ENCODE measurements at regions of chr2 and their contacts with region 1.

Region 1: DNA sequence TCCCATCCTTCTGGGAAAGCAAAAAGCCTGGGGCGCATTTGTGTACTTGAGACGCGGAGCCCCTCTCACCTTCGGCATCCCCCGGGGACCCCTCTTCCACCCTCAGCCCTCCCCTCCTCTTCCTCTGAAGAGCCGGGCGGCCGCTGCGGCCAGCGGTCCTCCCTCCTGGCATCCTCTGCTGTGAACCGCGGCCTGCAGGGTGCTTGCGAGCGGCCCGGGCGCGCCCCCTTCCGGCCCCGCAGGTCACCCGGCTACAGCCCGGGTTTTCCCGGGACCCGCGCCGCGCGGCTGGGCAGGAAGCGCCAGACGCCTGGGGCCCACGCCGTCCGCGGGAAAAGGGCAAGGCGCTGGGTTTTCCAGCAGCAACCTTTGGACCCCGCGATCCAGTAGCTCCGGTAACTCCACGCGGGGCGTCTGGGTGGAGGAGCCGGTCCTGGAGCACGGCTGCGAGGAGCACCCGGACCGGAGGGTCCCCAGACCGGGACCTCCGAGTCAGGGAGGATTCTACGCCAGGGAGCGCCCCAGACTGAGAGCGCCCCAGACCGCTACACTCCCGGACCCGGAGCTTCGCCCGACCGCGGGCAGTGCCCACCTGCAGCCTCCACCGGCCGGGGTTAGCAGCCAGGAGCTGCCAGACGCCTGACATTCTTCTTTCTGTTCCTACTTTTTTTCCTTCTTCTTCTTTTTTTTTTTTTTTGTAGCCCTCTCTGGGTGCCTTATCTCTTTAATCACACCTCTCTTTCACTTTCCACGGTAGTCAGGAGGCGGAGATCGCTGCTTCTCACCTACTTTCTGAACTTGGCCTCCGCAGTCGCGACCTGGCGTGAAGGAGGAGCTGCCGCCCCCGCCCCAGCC is at the start of gene IL18R1:
- DNase-seq: peak; percentile 10 to 84
- H3K4me3 ChIP-seq: peak within 1 kb of the TSS; percentile 66 to 91
- H3K27ac ChIP-seq: peak within 1 kb of the TSS; percentile 58 to 71
- H3K4me1 ChIP-seq: peaks cover 2 to 3% of the 10 kb centered on the region in 2 donors
- H3K27me3 ChIP-seq: no peaks in the 10 kb centered on the region
- CTCF ChIP-seq: peak; percentile 74 to 94 (median 89)
- total RNA-seq, gene IL18R1: 1.9 TPM

Region 2: GRCh38 chr2:102187496-102188150 is 168.1 kb before region 1 on chr2:
- intact Hi-C with region 1: loop called (anchors 10 kb)
- DNase-seq: peak in 1 of 2 donors; percentile 67
- H3K4me3 ChIP-seq: peak overlapping the region; percentile 62 to 74
- H3K27ac ChIP-seq: no peak overlapping the region
- H3K4me1 ChIP-seq: peaks cover 0 to 4% of the 10 kb centered on the region in 2 donors
- H3K27me3 ChIP-seq: no peaks in the 10 kb centered on the region
- CTCF ChIP-seq: peak; percentile 24 to 41 (median 33)

Region 3: GRCh38 chr2:102251042-102251848 is 104.5 kb before region 1 on chr2:
- intact Hi-C with region 1: loop called (anchors 5 kb)
- DNase-seq: no peak
- H3K4me3 ChIP-seq: peak overlapping the region; percentile 59 to 61
- H3K27ac ChIP-seq: no peak overlapping the region
- H3K4me1 ChIP-seq: peaks cover 0 to 5% of the 10 kb centered on the region in 2 donors
- H3K27me3 ChIP-seq: no peaks in the 10 kb centered on the region
- CTCF ChIP-seq: peak; percentile 31 to 51 (median 49)

Region 4: GRCh38 chr2:102291318-102292251 is 64.2 kb before region 1 on chr2:
- intact Hi-C with region 1: no loop called
- DNase-seq: no peak
- H3K4me3 ChIP-seq: no peak overlapping the region
- H3K27ac ChIP-seq: no peak overlapping the region
- H3K4me1 ChIP-seq: no peaks in the 10 kb centered on the region
- H3K27me3 ChIP-seq: peaks cover 4% of the 10 kb centered on the region
- CTCF ChIP-seq: no peak

Region 5: GRCh38 chr2:102301867-102302362 is 53.8 kb before region 1 on chr2:
- intact Hi-C with region 1: loop called (anchors 2 kb)
- DNase-seq: no peak
- H3K4me3 ChIP-seq: no peak overlapping the region
- H3K27ac ChIP-seq: no peak overlapping the region
- H3K4me1 ChIP-seq: no peaks in the 10 kb centered on the region
- H3K27me3 ChIP-seq: peaks cover 4% of the 10 kb centered on the region
- CTCF ChIP-seq: peak in 1 of 3 experiments; percentile 33

Region 6: DNA sequence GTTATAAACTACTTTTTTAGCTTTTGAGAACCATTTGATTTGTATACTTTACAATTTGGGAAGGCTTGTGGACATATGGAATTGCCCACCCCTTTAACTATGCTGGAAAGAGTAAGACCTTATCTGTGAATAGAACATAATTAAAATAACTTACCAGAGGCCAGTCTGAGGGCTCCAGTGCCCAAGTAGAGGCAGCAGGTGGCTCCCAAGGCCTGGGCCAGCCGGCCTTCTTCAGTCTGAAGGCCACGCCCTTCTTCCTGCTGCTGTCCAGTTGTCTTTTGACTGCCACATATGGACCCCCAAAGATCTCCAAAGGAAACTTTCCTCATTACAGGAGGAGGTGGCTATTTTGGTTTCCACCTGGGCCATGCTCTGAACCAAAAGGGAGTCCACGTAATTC is 55.2 kb after region 1 on chr2:
- intact Hi-C with region 1: no loop called
- DNase-seq: no peak
- H3K4me3 ChIP-seq: no peak overlapping the region
- H3K27ac ChIP-seq: no peak overlapping the region
- H3K4me1 ChIP-seq: no peaks in the 10 kb centered on the region
- H3K27me3 ChIP-seq: no peaks in the 10 kb centered on the region
- CTCF ChIP-seq: no peak

Region 7: DNA sequence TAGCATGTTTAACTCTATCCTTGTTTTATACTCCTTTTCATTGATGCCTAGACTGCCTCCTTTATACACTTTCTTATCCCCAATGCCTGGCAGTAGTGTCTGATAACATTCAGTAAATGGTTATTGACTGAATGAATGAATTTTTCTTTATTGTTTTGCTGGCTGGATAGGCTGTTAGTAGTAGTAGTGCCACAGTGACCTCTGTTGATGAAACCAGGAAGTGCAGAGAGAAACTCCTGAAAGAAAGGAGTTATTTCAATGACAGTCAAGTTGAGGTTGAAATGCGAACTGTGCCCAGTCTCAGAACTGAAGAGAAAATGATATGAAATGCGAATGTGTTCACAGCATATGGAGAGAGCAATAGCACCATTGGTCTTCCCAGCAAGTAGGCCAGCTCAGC is 236.8 kb after region 1 on chr2:
- intact Hi-C with region 1: no loop called
- DNase-seq: no peak
- H3K4me3 ChIP-seq: no peak overlapping the region
- H3K27ac ChIP-seq: no peak overlapping the region
- H3K4me1 ChIP-seq: no peaks in the 10 kb centered on the region
- H3K27me3 ChIP-seq: no peaks in the 10 kb centered on the region
- CTCF ChIP-seq: peak in 1 of 3 experiments; percentile 22